Activated T-helper 1 cell treated with anti-CD3 and anti-CD28 coated beads, Interleukin-12 subunit alpha, Interleukin-12 subunit beta, Interleukin-2, Interleukin-4 antibody, amounts not matched to agents 30 ng/mL and 10 ng/mL and 1 ng/mL, durations not matched to agents 14 hours and 24 hours and 36 hours (primary cell): ENCODE measurements at regions of chr13 and their contacts with region 1.

Region 1: DNA sequence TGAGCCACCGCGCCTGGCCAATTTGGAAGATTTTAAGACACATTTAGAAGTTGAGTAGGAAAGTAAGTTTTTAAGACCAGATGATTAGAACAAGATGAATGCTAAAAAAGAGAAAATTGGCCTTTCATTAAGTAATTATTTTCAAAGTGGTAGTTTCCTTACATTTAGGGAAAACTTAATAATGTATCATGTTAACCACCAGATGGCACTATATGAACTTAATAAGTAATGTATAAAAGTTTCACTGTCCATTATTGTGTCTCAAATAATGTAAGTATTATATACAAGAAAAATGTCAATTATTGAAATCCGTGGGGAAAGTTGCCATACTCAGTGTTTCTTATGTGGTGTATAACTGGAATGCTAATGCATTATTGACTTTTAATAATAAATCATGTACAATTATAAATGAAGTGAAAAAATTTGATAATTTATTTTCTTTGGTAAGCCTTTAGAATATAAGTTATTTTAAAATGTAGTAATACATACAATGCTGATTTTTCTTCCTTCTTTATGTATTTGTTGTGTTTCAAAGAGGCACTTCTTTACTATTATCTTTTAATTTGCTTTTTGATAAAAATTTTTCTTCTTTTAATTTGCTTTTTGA is 29.2 kb downstream of the COG6 start:
- DNase-seq: no peak
- H3K4me3 Mint-ChIP-seq: no peak overlapping the region
- H3K27ac Mint-ChIP-seq: no peak overlapping the region
- H3K4me1 Mint-ChIP-seq: peaks cover 25% of the 10 kb centered on the region
- H3K27me3 Mint-ChIP-seq: no peaks in the 10 kb centered on the region

Region 2: DNA sequence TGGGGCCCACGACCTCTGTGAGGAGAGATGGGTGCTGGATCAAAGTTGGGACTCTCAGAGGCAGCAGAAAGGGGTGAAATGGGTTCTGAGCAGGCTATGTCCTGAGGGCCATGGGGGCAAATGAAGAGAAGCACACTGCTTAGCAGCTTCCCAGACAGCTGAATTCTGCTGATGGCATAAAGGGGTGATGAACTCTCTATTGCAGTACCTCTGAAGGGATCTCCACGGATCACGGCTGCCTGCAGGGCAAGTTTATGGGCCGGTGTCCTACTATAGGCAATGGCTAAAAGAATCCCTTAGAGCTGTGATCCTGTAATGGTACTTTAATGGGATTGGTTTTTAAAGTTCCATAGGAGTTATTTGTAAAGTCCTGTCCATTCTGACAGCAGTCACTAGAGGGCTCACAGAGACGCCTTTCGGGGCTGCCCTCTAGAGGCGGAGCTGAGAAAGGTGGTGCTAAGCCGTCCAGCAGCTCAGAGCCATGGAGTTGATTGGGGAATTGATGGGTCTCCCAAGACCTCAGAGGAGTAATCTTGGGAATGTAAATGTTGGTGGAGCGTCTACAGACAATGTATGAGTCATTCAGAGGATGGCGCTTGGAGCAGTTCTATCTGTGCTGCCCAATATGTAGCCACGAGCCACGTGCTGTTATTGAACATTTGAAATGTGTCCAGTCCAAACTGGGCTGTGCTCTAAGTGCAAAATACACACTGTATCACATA is 258.1 kb after region 1 on chr13:
- intact Hi-C with region 1: loop called (anchors 5 kb)
- DNase-seq: peak; percentile 54
- H3K4me3 Mint-ChIP-seq: no peak overlapping the region
- H3K27ac Mint-ChIP-seq: no peak overlapping the region
- H3K4me1 Mint-ChIP-seq: peaks cover 6% of the 10 kb centered on the region
- H3K27me3 Mint-ChIP-seq: peaks cover 4% of the 10 kb centered on the region

Region 3: DNA sequence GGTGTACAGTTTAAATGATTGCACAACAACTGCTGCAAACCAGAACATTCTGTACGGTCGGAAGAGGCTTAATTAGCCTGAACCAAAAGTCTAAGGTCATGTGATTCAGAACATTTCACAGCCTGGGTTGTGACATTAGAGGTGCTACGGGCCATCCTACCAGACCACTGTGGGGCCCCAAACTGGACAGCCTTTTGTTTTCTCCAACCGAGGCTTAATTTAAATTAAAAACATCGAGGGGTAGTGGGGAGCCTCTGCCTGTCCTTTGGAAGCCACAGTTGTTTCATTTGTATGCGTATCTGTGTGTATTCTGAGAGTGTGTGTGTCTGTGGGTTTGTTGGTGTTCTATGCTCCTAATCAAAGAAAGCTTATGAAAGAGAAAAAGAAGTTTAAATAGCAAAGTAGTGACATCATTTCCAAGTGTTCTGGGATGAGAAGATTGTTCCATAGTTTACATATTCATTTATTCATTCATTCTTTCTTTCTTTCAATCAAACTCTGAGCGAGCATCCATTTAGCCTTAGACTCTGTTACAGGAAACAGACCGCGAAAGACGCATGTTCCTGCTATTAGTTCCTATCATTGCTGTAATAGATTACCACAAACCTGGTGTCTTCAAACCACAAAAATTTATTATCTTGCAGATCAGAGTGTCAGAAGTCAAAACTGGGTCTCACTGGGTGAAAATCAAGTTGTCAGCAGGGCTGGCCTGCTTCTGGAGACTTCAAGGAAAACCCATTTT is 537.0 kb after region 1 on chr13:
- intact Hi-C with region 1: loop called (anchors 5 kb)
- DNase-seq: no peak
- H3K4me3 Mint-ChIP-seq: peak overlapping the region; percentile 37
- H3K27ac Mint-ChIP-seq: peak overlapping the region; percentile 69
- H3K4me1 Mint-ChIP-seq: peaks cover 43% of the 10 kb centered on the region
- H3K27me3 Mint-ChIP-seq: no peaks in the 10 kb centered on the region

Region 4: DNA sequence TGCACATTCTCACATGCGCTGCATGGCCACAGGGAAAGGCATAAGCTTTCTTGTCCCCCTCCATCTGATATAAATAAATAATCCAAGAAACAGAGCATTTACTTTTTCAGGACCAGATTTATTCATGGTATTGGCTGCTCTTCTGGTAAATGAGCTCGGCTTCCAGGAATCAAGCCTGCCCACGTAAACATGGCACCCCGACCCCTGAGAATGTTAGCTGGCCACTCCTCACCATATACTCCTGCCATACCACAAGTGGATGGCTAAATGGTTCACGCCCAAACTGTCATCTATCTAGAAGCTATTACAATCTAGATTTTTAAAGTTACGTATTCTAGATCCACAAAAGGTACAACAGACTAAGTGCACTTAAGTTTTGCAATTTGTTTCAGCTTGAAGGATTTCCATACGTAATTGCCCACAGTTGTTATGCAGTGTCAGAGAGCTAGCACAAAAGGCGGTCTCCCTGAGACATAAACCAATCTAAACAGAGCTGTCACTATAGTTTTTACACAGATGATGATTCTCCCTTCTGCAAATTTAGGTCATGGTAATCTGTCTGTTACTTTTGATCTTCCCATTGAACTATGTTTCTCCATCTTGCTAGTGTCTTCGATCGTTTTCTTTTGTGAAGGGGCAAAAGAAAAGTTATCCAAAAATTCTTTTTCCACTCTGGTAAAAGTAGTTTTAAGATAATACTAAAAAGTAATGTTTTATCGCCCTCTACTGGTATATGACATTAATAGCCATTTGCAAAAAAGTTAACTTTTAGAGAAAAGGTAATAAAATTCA is 998.0 kb after region 1 on chr13:
- intact Hi-C with region 1: loop called (anchors 1 kb)
- DNase-seq: no peak
- H3K4me3 Mint-ChIP-seq: no peak overlapping the region
- H3K27ac Mint-ChIP-seq: peak overlapping the region; percentile 46
- H3K4me1 Mint-ChIP-seq: peaks cover 15% of the 10 kb centered on the region
- H3K27me3 Mint-ChIP-seq: peaks cover 2% of the 10 kb centered on the region